ENCODE measurements at regions of chr2 and their contacts with region 1.

Region 1: GRCh38 chr2:229269941-229270340 is 1.1 kb downstream of the PID1 start:
- H3K4me3 Mint-ChIP-seq: no peak overlapping the region
- H3K27ac Mint-ChIP-seq: no peak overlapping the region
- H3K4me1 Mint-ChIP-seq: peaks cover 55% of the 10 kb centered on the region
- H3K27me3 Mint-ChIP-seq: peaks cover 47% of the 10 kb centered on the region

Region 2: GRCh38 chr2:229133155-229133772 is 136.7 kb before region 1 on chr2:
- intact Hi-C with region 1: loop called (anchors 10 kb)
- H3K4me3 Mint-ChIP-seq: no peak overlapping the region
- H3K27ac Mint-ChIP-seq: no peak overlapping the region
- H3K4me1 Mint-ChIP-seq: no peaks in the 10 kb centered on the region
- H3K27me3 Mint-ChIP-seq: peaks cover 2% of the 10 kb centered on the region

Measured in dendritic cell treated with granulocyte-macrophage colony-stimulating factor and Interleukin-4, amounts not matched to agents 40 ng/mL and 50 ng/mL, for 4 days (primary cell).